GM10248 (cell line): ENCODE measurements at regions of chr3 and their contacts with region 1.

Region 1: DNA sequence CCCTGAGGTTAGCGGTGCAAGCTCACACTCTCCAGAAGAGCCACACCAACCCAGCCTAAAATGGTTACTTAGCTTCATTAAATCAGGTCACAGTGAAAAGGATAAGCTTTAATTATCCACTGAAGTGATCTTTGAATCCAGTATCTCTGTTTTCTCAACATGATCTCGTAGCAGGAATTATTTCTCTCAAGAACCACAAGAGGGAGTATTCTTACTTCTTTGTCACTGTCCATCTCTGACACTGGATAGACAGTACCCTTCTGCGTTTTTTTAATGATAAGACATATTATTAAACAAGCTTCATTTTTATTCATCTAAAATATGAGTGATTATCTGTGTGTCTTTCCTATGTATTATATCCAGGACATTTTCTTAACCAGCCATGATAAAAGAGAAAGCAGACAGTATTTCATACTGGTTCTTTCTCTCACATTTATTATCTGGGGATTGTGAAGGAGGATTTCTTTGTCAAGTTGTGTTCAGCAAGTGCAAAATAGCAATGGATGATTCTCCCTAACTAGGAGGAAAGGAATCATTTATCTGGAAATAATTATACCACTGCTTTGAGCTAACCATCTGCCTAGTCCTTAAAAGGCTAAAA is 105.4 kb upstream of the CCDC54 start:
- DNase-seq: peak; percentile 28
- CTCF ChIP-seq: peak; percentile 62

Region 2: DNA sequence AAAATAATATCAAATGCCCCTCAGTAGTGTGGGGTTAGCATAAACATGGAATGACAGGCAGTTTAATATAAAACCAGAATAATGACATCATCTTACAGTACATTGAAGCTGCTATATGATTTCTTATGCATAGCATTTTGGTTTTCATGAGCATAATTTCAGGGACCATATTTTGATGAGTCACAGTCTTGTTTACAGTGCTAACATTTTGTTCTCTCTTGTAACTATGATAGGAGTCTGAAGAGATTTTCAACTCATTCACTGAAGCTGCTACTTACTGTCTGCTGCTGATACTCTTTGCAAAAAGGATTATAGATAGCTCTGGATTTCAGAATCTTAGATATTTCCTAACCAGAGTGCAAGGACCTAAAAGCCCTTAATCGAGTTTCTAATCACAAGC is 12.7 kb after region 1 on chr3:
- CTCF ChIA-PET with region 1: interaction called, 18 read pairs
- POLR2A ChIA-PET with region 1: no interaction called
- DNase-seq: no peak
- CTCF ChIP-seq: no peak

Region 3: DNA sequence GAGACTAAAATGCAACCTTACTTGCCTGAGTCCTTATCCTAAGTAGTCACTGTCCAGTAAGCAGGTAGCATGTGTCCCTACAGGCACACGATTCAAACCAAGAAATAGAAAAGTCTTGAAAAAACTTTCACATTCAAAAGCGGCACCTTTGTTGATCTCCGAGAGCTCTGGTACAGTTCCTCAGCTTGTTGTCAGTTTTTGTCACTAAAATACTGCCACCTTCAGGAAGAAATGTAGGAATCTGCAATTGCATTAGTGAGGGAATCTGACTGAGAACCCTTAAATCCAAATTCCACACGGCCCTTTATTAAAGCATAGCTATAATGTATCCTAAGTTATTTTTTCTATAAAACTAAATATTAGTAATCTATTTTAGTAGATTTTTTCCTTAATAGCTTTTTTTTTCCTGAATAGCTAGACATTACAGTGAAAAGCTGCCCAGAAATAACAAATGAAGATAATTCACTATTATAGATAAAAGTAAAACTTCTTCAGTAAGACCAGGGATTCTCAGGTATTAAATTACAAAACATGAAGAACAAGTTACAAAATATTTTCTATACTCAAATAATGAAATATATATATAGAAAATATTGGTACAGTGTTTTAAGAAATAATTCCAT is 149.4 kb after region 1 on chr3:
- CTCF ChIA-PET with region 1: interaction called, 14 read pairs
- POLR2A ChIA-PET with region 1: no interaction called
- DNase-seq: peak; percentile 33
- CTCF ChIP-seq: peak; percentile 69

Region 4: DNA sequence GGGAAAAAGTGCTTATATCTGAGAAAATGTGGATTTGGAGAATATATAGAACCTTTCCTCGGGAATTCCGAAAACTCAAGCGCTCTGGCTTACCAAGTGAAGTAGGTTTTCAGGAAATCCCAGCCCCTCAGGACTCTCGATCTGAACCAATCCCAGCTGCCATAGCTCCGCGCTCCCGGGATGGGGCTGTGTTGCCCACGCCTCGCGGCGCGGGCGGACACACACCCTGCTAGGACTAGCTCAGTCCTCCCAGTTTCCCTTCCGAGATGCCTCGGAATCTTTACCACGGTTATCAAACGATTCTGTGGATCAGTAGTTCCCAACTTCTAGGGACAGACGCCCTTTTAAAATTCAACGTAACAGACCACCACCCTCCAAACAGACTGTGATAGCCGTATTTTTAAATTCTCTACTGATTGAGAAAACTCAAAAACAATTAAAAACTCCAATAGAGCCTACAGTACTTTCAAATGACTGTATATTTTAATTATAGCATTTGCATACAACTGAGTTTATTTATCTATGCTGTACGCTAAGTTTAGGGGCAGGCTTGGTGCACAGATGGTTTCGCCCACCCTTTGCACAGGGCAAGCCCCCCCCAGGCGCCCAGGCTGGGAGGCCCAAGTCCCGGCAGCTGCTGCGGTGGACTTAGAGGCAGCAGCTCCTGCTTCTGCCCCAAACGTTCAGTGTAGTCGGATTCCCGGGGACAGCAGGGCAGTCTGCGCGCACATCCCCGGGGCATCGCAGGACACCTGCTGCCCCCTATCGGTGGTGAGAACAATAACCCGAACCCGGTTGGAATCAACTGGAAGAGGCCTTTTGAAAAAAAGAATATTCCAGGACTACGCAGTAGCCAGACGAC is 157.7 kb after region 1 on chr3:
- CTCF ChIA-PET with region 1: interaction called, 16 read pairs
- POLR2A ChIA-PET with region 1: no interaction called
- DNase-seq: peak; percentile 80
- CTCF ChIP-seq: peak; percentile 80